HCT116 (cell line): ENCODE measurements at regions of chr17 and their contacts with region 1.

Region 1: DNA sequence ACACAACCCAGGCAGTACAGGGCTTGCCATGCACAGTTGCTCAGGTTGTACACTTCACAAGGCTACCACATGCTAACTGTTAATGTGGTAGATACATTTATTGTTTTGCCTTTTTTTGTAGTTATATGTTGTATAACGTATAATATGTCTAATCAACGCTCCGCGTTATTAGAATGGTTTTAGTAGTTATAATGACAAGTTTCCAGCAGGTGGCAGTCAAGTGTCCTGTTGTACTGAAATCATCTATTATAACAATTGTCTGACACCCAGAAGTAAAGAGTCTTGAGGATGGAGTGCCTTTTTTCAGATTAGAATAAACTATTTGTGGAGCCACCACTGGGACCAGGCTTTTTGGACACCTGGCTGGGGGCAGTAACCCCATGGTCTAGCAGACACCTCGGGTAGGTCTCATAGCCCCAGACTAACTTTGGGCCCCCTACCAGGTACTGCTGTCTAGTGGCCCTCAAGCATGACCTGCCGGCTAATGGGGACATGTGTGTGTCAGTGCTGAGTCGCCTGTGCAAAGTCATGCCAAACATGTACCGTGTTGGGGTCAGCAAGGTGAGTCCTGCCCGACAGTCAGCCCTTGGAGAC is 32.8 kb downstream of the MYO15A start:
- DNase-seq: no peak
- ATAC-seq: peak; percentile 52
- H3K4me3 ChIP-seq: no peak overlapping the region
- H3K27ac ChIP-seq: no peak overlapping the region
- H3K4me1 ChIP-seq: no peaks in the 10 kb centered on the region
- H3K27me3 ChIP-seq: no peaks in the 10 kb centered on the region
- CTCF ChIP-seq: peak; percentile 44 to 67 (median 55); a peak in 5 of 6 replicates
- POLR2A ChIP-seq: no peak
- RAD21 ChIP-seq: peak; percentile 70

Region 2: DNA sequence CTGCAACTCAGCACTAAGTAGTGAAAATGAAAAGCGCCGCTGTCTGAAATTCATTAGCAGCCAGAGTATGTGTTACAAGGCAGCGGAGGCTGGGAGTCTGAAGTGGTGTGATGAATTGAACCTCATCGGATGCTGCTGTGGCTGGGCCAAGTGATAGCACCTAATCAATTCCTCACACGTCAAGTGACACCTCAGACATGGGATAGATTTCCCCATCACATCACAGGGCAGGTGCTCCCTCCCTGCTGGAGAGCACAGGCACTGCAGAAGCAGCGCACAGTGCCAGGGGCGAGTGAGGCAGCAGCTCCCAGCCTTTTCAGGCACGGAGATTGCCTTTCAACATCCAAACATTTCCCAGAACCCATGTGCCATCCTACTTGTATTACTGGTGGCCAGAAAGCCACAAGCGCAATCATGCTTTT is 136.4 kb before region 1 on chr17:
- CTCF ChIA-PET with region 1: no interaction called
- POLR2A ChIA-PET with region 1: no interaction called
- RAD21 ChIA-PET with region 1: no interaction called
- intact Hi-C with region 1: no loop called
- DNase-seq: no peak
- ATAC-seq: peak; percentile 91
- H3K4me3 ChIP-seq: no peak overlapping the region
- H3K27ac ChIP-seq: no peak overlapping the region
- H3K4me1 ChIP-seq: no peaks in the 10 kb centered on the region
- H3K27me3 ChIP-seq: no peaks in the 10 kb centered on the region
- CTCF ChIP-seq: peak in 2 of 3 experiments; percentile 46 to 55; a peak in 4 of 6 replicates
- POLR2A ChIP-seq: no peak
- RAD21 ChIP-seq: no peak

Region 3: GRCh38 chr17:18153749-18154161 is 12.4 kb after region 1 on chr17:
- CTCF ChIA-PET with region 1: interaction called, 27 read pairs
- POLR2A ChIA-PET with region 1: interaction called, 3 read pairs
- RAD21 ChIA-PET with region 1: no interaction called
- intact Hi-C with region 1: loop called (anchors 2 kb)
- DNase-seq: peak; percentile 89
- ATAC-seq: peak; percentile 90
- H3K4me3 ChIP-seq: peak overlapping the region; percentile 46 to 61
- H3K27ac ChIP-seq: peak overlapping the region; percentile 74
- H3K4me1 ChIP-seq: peaks cover 21 to 49% of the 10 kb centered on the region in 2 experiments
- H3K27me3 ChIP-seq: no peaks in the 10 kb centered on the region
- CTCF ChIP-seq: no peak
- POLR2A ChIP-seq: no peak
- RAD21 ChIP-seq: no peak

Region 4: GRCh38 chr17:18217412-18218015 is 76.2 kb after region 1 on chr17:
- CTCF ChIA-PET with region 1: interaction called, 4 read pairs
- POLR2A ChIA-PET with region 1: no interaction called
- RAD21 ChIA-PET with region 1: no interaction called
- intact Hi-C with region 1: loop called (anchors 5 kb)
- DNase-seq: peak; percentile 23
- ATAC-seq: peak; percentile 87
- H3K4me3 ChIP-seq: no peak overlapping the region
- H3K27ac ChIP-seq: no peak overlapping the region
- H3K4me1 ChIP-seq: peaks cover 21 to 34% of the 10 kb centered on the region in 2 experiments
- H3K27me3 ChIP-seq: no peaks in the 10 kb centered on the region
- CTCF ChIP-seq: peak; percentile 74 to 98 (median 94)
- POLR2A ChIP-seq: no peak
- RAD21 ChIP-seq: peak; percentile 87